IMR-90 (cell line): ENCODE measurements at regions of chr6 and their contacts with region 1.

Region 1: GRCh38 chr6:143745166-143746133 is 67.7 kb downstream of the PHACTR2 start:
- DNase-seq: peak; percentile 76
- ATAC-seq: peak; percentile 87
- H3K4me3 ChIP-seq: peak overlapping the region; percentile 12; the same call in 1 of the 2 replicates
- H3K27ac ChIP-seq: peak overlapping the region; percentile 88
- H3K4me1 ChIP-seq: peaks cover 27% of the 10 kb centered on the region
- H3K27me3 ChIP-seq: no peaks in the 10 kb centered on the region
- CTCF ChIP-seq: no peak
- POLR2A ChIP-seq: no peak
- RAD21 ChIP-seq: no peak

Region 2: DNA sequence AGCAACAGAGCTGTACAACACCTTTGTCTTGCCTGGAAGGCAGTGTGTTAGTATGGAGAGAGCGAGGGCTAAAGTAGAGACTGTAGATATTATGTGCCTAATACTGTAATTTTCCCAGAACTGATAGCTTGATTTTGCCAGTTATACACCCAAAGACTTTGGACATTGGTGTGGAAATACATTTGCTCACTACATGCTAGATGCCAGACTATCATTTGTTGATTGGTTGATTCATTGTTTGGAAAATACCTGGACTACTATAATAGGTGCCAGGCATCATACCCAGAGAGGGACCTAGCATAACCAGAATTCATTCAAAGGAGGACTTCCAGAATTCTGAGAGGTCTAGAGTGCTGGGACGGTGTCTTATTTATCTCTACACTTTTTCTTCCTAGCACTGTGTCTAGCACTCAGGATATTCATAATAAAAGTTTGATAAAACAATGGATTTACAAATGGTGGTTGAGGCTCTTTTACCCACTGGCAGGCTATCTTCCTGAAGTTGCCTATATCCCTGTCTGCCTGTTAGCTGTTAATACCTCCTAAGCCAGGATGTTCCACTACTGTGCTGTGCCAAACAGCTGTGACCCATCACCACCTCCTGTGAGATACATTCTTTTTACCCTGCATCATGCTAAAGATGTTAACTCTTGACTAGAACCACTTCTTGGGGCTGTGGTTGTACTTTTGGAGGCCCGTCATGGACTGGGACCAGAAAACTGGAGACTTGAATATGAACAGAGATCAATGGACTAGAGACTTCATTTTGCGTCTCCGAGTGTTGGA is 161.7 kb before region 1 on chr6:
- CTCF ChIA-PET with region 1: no interaction called
- POLR2A ChIA-PET with region 1: no interaction called
- dilution Hi-C with region 1: no loop called
- in situ Hi-C with region 1: no loop called
- intact Hi-C with region 1: loop called (anchors 1 kb)
- DNase-seq: peak; percentile 91
- ATAC-seq: peak; percentile 87
- H3K4me3 ChIP-seq: no peak overlapping the region
- H3K27ac ChIP-seq: peak overlapping the region; percentile 68; the same call in 1 of the 2 replicates
- H3K4me1 ChIP-seq: peaks cover 2% of the 10 kb centered on the region
- H3K27me3 ChIP-seq: no peaks in the 10 kb centered on the region
- CTCF ChIP-seq: no peak
- POLR2A ChIP-seq: no peak
- RAD21 ChIP-seq: no peak

Region 3: DNA sequence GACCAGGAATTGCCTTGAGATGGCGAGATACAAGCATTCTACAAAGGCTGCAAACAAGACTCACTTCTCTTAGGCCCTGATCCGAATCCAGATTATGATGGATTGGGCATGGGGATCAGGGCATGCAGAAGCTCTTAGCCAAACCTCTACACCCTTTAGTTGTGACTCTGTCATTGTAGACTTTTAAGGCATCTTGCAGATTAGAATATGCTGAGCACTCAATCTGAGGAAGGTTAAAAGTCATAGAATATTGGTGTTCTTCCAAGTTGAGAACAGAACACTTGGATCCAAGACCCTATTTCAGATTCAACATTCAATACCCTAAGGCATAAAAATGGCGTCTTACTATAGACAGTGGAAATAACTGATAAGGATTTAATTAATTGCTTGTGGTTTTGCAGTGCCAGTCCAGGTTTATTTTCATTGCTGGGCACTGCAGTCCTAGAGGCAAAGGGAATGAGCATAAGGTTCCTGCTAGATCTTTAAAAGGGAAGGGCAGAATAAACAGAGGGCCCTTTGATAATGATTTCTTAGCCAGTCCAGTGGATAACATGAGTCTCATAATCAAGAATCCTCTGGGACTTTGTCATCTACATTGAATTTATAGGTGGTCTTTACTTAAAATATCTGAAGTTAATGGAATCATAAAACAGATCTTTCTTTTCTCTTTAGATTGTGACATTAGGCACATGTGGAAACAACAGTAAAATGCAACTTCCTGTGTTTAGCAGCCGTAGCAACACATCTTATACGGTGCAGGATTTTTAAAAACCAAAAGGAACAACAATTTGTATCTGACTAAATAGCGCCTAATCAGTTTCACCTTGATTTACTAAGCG is 50.1 kb before region 1 on chr6:
- CTCF ChIA-PET with region 1: no interaction called
- POLR2A ChIA-PET with region 1: interaction called, 3 read pairs
- dilution Hi-C with region 1: no loop called
- in situ Hi-C with region 1: no loop called
- intact Hi-C with region 1: loop called (anchors 5 kb)
- DNase-seq: no peak
- ATAC-seq: no peak
- H3K4me3 ChIP-seq: no peak overlapping the region
- H3K27ac ChIP-seq: no peak overlapping the region
- H3K4me1 ChIP-seq: peaks cover 24% of the 10 kb centered on the region
- H3K27me3 ChIP-seq: no peaks in the 10 kb centered on the region
- CTCF ChIP-seq: no peak
- POLR2A ChIP-seq: no peak
- RAD21 ChIP-seq: no peak